GM23248 (cell line): ENCODE measurements at regions of chr5 and their contacts with region 1.

Region 1: GRCh38 chr5:172035039-172035438 is 28.6 kb upstream of the FBXW11 start:
- DNase-seq: no peak
- H3K4me3 ChIP-seq: no peak overlapping the region
- H3K27ac ChIP-seq: no peak overlapping the region
- H3K4me1 ChIP-seq: no peaks in the 10 kb centered on the region
- H3K27me3 ChIP-seq: no peaks in the 10 kb centered on the region

Region 2: GRCh38 chr5:171630027-171630669 is 404.9 kb before region 1 on chr5:
- in situ Hi-C with region 1: loop called (anchors 25 kb)
- DNase-seq: peak; percentile 72
- H3K4me3 ChIP-seq: no peak overlapping the region
- H3K27ac ChIP-seq: no peak overlapping the region
- H3K4me1 ChIP-seq: no peaks in the 10 kb centered on the region
- H3K27me3 ChIP-seq: peaks cover 65% of the 10 kb centered on the region

Region 3: DNA sequence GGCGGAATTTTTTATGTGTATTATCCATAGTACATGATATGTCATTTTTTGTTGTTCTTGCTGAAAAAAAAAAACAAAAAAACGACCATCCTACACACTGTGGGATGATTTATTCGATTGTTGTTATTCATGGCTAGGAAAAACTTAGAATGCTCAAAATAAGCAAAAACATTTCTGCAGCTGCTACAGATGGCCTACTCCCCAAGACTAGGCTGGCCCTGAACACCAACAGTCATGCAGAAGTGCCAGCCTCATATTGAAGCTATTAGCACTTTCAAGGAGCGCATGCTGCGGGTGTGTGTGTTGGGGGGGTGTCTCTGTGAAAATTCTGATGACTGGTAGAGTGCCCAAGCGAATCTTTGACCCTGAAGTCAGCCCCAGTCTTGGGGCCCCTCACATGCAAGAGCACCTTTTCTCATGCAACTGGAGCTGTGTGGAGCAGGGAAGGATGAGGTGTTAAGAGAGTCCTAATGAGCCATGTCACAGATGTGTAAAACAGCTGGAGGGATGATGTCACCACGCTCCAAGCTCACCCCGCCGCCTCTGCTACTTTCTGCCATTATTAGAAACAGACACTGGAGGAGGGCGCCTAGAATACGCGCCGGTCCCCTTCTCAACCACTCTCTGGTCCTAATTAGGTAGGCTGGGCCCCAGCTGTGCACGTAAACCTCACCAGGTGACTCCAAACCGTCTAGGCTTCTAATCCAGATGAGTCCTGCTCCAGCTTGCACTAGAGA is 310.4 kb before region 1 on chr5:
- in situ Hi-C with region 1: no loop called
- DNase-seq: peak; percentile 54
- H3K4me3 ChIP-seq: no peak overlapping the region
- H3K27ac ChIP-seq: no peak overlapping the region
- H3K4me1 ChIP-seq: 0 out of 2 replicates have a peak, but pooled peaks cover 9% of the 10 kb centered on the region
- H3K27me3 ChIP-seq: peaks cover 38% of the 10 kb centered on the region

Region 4: GRCh38 chr5:171913987-171914273 is 121.1 kb before region 1 on chr5:
- in situ Hi-C with region 1: loop called (anchors 10 kb)
- DNase-seq: peak; percentile 46
- H3K4me3 ChIP-seq: no peak overlapping the region
- H3K27ac ChIP-seq: no peak overlapping the region
- H3K4me1 ChIP-seq: peaks cover 17% of the 10 kb centered on the region
- H3K27me3 ChIP-seq: no peaks in the 10 kb centered on the region